ENCODE measurements at regions of chr5 and their contacts with region 1.

Region 1: DNA sequence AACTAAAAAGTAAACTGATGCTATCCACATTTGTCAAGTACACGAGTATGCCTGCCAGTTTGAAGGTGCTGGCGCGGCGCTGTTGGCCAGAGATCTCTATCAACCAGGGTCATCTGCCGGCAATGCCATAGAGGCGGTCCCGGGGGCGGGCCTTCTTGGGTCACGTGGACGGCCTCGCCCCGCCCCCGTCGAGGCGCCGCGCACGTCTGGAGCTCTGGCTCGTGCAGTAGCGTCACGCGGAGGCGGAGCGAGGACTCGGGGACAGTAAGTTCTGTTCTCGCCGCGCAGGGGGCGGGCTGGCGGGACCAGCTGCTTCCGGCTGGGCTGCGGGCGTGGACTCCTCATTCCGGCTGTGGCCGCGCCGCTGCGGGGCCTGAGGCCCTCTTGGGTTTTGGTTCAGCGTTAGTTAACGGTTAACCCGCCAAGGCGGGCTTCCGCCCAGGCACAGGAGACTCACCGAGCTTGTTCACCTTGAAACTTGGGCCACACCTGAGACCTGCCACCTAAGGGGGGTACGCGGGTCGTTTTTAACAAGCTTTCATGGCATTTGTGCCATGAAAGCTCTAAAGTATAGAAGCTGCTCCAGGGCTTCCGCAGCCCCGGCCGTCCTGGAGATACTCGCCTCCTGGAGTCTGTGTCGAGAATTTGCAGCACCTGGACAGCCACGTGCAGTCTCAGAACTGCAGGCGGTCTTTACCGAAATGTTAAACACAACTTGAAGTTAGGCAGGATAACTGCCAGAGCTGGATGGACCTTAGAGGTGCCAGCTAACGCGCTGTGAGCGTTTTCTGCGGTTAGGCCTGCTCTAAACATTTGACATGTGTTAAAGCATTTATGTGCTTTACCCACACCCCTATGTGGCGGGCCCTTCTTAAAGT is at the start of gene RFESD:
- DNase-seq: peak; percentile 97
- H3K4me3 ChIP-seq: peak within 1 kb of the TSS; percentile 49 to 76 (median 64)
- H3K27ac ChIP-seq: peak within 1 kb of the TSS; percentile 90 to 98 (median 94)
- H3K4me1 ChIP-seq: peaks cover 0 to 29% (median 10%) of the 10 kb centered on the region in 3 donors
- H3K27me3 ChIP-seq: no peaks in the 10 kb centered on the region
- CTCF ChIP-seq: peak in 3 of 6 experiments; percentile 7 to 26 (median 23)
- POLR2A ChIP-seq: peak in 3 of 4 donors; percentile 45 to 96 (median 96)
- total RNA-seq, gene RFESD: 0.11 to 3.6 (median 1.0) TPM

Region 2: DNA sequence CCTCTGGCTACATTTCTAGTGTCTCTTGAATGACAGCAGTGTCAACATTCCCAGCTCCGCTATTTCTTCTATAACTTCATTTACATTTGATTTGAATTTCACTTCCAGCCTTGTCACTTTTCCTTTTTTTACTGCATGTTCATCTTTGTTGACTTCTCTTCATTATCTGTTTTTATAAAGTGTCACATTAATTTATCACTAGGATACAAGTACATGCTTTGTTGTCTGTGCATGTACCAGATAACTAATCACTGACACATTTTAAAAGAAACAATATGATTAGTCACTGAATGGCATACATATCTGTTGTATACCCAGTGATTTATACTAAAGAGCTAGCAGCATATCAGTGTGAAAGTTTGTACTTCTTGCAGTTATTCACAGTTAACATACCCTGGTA is 62.8 kb before region 1 on chr5:
- intact Hi-C with region 1: no loop called
- DNase-seq: no peak
- H3K4me3 ChIP-seq: no peak overlapping the region
- H3K27ac ChIP-seq: no peak overlapping the region
- H3K4me1 ChIP-seq: no peaks in the 10 kb centered on the region
- H3K27me3 ChIP-seq: no peaks in the 10 kb centered on the region
- CTCF ChIP-seq: no peak
- POLR2A ChIP-seq: no peak

Region 3: GRCh38 chr5:95846554-95847260 is 199.9 kb after region 1 on chr5:
- intact Hi-C with region 1: loop called (anchors 5 kb)
- DNase-seq: no peak
- H3K4me3 ChIP-seq: no peak overlapping the region
- H3K27ac ChIP-seq: peak overlapping the region in 1 of 4 donors; percentile 16
- H3K4me1 ChIP-seq: peaks cover 0 to 24% (median 13%) of the 10 kb centered on the region in 3 donors
- H3K27me3 ChIP-seq: no peaks in the 10 kb centered on the region
- CTCF ChIP-seq: peak; percentile 63 to 96 (median 96)
- POLR2A ChIP-seq: no peak